ENCODE measurements at regions of chr7 and their contacts with region 1.

Region 1: DNA sequence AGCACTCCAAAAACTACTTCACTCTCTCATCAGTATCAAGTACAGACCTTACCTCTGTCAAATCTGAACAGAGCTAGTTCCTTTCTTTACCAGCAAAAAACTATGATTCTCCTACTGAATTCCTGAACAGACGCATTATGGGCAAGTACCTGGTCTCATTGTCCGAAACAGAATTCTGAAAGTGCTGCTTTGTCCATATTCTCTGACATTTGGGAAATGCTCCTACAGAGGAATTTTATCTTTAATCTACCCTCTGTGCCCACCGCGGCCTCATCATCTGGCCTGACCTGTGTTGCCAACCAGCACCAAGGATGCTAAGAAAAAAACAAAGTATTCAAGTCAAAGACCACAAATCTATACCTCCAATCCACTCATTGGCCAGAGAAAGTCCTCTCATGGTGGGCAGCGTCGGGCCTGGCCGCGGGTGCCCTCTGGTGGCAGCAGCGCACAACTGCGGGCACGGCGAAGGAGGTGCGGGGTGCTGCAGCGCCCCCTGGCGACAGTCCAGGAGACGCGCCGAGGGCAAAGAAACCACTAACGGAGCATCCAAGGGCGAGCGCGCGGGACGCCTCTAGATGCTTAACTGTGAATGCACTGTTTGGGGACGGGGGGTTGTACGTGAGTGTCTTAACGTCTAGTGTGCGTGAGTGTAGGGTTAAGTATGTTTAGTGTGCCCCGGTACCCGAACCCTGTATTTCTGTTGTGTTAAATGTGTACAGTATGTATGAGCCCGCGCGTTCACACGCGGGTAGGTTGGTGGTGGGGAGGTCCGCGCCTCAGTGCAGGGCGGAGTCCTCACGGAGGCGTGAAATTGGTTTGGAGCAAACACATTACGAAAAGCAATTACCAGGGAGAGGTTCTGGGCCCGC is 5.0 kb upstream of the GBX1 start:
- DNase-seq: peak; percentile 65 to 88 (median 78)
- H3K4me3 ChIP-seq: no peak overlapping the region
- H3K27ac ChIP-seq: no peak overlapping the region
- H3K4me1 ChIP-seq: no peaks in the 10 kb centered on the region
- H3K27me3 ChIP-seq: no peaks in the 10 kb centered on the region
- CTCF ChIP-seq: peak; percentile 98 to 100 (median 98)
- EP300 ChIP-seq: no peak
- POLR2A ChIP-seq: no peak

Region 2: DNA sequence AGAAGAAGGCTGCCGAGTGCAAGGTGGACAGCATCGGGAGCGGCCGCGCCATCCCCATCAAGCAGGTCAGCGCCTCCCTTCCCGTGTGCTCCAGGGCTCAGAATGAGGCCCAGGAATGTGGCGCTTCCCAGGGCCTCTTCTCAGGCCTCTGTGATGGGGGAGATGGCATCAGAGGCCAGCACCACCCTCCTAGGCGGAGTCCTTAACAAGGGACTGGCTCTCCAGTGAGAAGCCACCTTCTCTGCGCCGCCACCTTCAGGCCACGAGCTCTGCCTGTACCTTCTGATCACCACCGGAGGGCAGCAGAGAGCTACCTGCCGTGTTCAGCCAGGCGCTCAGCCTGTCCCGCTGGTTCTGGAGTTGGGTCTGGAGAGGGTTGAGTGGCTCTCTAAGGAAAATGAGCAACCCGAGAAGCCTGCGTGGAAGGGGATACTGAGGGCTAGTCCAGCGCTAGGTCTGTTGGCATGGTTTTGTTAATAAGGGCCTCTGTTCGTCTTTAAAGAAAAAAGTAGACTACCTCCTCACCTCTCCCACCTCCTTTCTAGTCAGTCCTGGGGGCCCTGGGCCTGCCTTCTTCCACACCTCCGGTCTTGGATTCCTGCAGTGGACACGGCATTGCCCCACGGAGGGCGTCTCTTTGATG is 48.6 kb before region 1 on chr7:
- intact Hi-C with region 1: loop called in 3 of 4 experiments (anchors 5 kb)
- DNase-seq: peak; percentile 77 to 88 (median 88)
- H3K4me3 ChIP-seq: no peak overlapping the region
- H3K27ac ChIP-seq: no peak overlapping the region
- H3K4me1 ChIP-seq: peaks cover 8% of the 10 kb centered on the region
- H3K27me3 ChIP-seq: no peaks in the 10 kb centered on the region
- CTCF ChIP-seq: peak; percentile 88 to 93 (median 90)
- EP300 ChIP-seq: no peak
- POLR2A ChIP-seq: no peak

Measured in ovary (tissue), 10 donors.